HCT116 (cell line): ENCODE measurements at regions of chr9 and their contacts with region 1.

Region 1: GRCh38 chr9:87336914-87337333 is 160.7 kb upstream of the DAPK1 start:
- DNase-seq: peak; percentile 54
- ATAC-seq: peak; percentile 81
- H3K4me3 ChIP-seq: no peak overlapping the region
- H3K27ac ChIP-seq: no peak overlapping the region
- H3K4me1 ChIP-seq: no peaks in the 10 kb centered on the region
- H3K27me3 ChIP-seq: peaks cover 26% of the 10 kb centered on the region
- CTCF ChIP-seq: peak; percentile 40 to 73 (median 65); a peak in 5 of 6 replicates
- POLR2A ChIP-seq: no peak
- RAD21 ChIP-seq: peak; percentile 84

Region 2: GRCh38 chr9:87179573-87180340 is 157.2 kb before region 1 on chr9:
- CTCF ChIA-PET with region 1: no interaction called
- POLR2A ChIA-PET with region 1: no interaction called
- RAD21 ChIA-PET with region 1: no interaction called
- intact Hi-C with region 1: no loop called
- DNase-seq: no peak
- ATAC-seq: no peak
- H3K4me3 ChIP-seq: no peak overlapping the region
- H3K27ac ChIP-seq: no peak overlapping the region
- H3K4me1 ChIP-seq: no peaks in the 10 kb centered on the region
- H3K27me3 ChIP-seq: peaks cover 10% of the 10 kb centered on the region
- CTCF ChIP-seq: no peak
- POLR2A ChIP-seq: no peak
- RAD21 ChIP-seq: no peak

Region 3: GRCh38 chr9:87662808-87663528 is 326.0 kb after region 1 on chr9:
- CTCF ChIA-PET with region 1: interaction called, 41 read pairs
- POLR2A ChIA-PET with region 1: no interaction called
- RAD21 ChIA-PET with region 1: interaction called in 1 of 2 experiments, 4 read pairs
- intact Hi-C with region 1: loop called (anchors 1 kb)
- DNase-seq: peak; percentile 51
- ATAC-seq: peak; percentile 98
- H3K4me3 ChIP-seq: no peak overlapping the region
- H3K27ac ChIP-seq: no peak overlapping the region
- H3K4me1 ChIP-seq: no peaks in the 10 kb centered on the region
- H3K27me3 ChIP-seq: no peaks in the 10 kb centered on the region
- CTCF ChIP-seq: peak; percentile 84 to 90 (median 85)
- POLR2A ChIP-seq: no peak
- RAD21 ChIP-seq: peak; percentile 92